A673 (cell line): ENCODE measurements at regions of chr15 and their contacts with region 1.

Region 1: GRCh38 chr15:97708252-97708651 is 252.3 kb upstream of the ARRDC4 start:
- DNase-seq: no peak
- H3K4me3 ChIP-seq: no peak overlapping the region
- H3K27ac ChIP-seq: no peak overlapping the region
- H3K4me1 ChIP-seq: no peaks in the 10 kb centered on the region
- H3K27me3 ChIP-seq: no peaks in the 10 kb centered on the region
- CTCF ChIP-seq: no peak

Region 2: GRCh38 chr15:96638793-96639192 is 1069.5 kb before region 1 on chr15:
- CTCF ChIA-PET with region 1: no interaction called
- POLR2A ChIA-PET with region 1: interaction called, 11 read pairs
- intact Hi-C with region 1: no loop called
- DNase-seq: no peak
- H3K4me3 ChIP-seq: no peak overlapping the region
- H3K27ac ChIP-seq: no peak overlapping the region
- H3K4me1 ChIP-seq: no peaks in the 10 kb centered on the region
- H3K27me3 ChIP-seq: no peaks in the 10 kb centered on the region
- CTCF ChIP-seq: no peak